Posterior vena cava (tissue), 2 donors: ENCODE measurements at regions of chr4 and their contacts with region 1.

Region 1: GRCh38 chr4:169757575-169758184 is at the start of gene HPF1:
- DNase-seq: peak; percentile 98
- total RNA-seq, gene HPF1: 22.3 to 23.0 TPM

Region 2: DNA sequence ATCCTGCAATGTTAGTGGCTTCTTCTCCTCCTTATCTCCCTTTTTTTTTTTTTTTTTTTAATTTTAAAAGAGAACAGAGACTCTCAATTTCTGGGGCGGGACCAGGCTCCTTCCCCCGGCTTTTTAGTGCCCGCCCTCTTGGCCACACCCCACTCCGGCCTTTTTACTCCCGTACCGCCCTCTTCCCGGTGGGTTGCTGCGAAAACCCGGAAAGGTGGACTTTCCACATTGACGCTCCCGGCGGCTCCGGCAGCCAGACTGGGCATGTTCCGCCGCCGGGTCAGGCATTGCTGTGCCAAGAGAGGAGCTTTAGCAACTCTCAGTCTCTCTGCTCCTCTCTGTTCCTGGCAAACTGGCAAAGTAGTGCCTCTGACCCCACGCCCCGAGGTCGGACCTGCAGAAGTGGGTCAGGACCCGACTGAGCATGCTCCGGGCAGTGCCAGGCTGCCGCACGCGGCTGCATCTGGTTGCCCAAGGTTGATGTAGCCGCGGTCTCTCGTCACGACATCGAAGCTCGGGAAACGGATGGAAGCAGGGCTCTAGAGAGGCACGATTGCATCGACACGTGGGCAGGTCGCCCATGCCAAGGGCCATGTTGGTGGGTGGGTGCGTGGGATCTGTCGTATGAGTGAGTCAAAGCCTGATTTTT is 269.6 kb after region 1 on chr4:
- intact Hi-C with region 1: loop called in 1 of 2 experiments (anchors 10 kb)
- DNase-seq: peak; percentile 98